H1 (cell line): ENCODE measurements at regions of chr1 and their contacts with region 1.

Region 1: DNA sequence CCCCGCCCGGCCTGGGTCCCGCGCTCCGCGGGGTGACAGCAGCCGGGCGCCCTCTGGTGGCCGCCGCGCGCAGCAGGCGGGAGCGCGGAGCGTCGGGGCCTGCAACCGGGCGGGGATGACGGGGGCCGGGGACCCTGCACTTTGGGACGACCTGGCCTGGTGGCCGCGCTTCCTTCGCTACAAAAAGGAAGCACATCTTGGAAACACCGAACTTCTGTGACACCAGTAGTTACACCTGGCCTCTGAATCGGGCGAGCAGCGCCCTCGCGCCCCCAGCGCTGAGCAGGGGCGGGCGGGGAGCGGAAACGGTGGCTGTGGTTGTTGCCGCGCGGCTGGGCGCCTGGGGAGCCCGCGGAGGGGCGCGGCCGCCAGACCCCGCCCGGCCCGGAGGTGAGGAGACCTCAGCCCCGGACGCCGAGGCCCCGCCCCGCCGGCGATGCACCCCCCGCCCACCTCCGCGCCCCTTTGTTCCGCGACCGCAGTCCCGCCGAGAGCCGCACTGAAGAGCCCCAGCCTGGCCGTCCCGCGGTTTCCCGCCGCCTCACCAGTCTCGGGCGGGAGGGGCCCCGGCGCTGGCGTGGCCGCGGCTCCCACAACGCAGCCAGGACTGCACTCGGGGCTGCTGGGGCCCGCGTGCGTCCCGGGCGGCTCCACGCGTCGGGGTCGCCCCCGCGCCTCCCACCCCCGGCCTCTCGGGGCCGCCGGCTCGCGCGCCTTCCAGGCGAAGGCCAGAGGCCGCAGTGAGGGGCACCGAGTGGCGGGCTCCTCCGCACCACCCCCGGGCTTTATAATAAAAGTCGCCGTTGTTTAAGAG is 59.3 kb downstream of the H3-3A start:
- DNase-seq: peak in 1 of 2 experiments; percentile 89
- H3K4me3 ChIP-seq: peak overlapping the region; percentile 54 to 89 (median 68)
- H3K27ac ChIP-seq: peak overlapping the region; percentile 90; the same call in 1 of the 2 replicates
- H3K4me1 ChIP-seq: peaks cover 4 to 27% (median 14%) of the 10 kb centered on the region in 4 experiments
- H3K27me3 ChIP-seq: peaks cover 0 to 7% (median 4%) of the 10 kb centered on the region in 4 experiments; a peak in 3 of 7 replicates
- CTCF ChIP-seq: peak; percentile 75 to 88 (median 79)
- EP300 ChIP-seq: no peak
- POLR2A ChIP-seq: peak in 1 of 2 experiments; percentile 82; a peak in 1 of 3 replicates
- RAD21 ChIP-seq: peak; percentile 50 to 83

Region 2: DNA sequence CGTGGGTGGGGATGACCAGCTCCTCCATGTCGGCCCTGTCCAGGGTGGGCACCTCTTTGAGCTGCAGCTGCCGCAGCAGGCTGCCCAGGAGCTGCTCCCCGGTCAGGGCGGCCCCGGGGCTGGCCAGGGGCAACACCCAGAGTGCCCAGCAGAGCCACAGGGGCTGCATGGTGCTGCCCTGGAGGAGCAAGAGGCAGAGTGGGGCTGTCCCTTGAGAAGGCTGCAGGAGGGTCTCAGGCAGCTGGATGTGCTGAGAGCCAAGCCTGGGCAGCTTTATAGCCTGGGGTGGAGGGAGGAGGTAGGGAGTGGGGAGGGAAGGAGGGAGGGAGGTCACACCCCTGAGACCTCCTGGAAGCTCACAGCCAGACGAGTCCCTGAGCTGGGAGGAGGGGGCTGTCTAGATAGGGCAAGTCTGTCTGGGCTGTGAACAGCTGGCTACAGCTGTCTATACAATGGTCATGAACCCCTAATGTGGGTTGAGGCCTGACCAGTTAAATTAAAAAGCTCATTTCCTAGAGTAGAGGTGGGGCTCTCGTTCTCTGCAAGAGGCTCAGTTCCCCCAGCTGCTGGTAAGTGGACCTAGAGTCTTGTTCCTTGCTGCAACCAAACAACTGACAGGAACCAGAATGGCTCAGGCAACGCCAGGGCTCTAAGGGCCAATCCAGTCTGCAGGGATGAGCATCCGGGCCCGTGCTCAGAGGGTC is 232.7 kb before region 1 on chr1 and contains the start of gene LEFTY1:
- CTCF ChIA-PET with region 1: no interaction called
- POLR2A ChIA-PET with region 1: no interaction called
- DNase-seq: no peak
- H3K4me3 ChIP-seq: peak within 1 kb of the TSS in 1 of 4 experiments; percentile 41; a peak in 1 of 8 replicates
- H3K27ac ChIP-seq: no peak within 1 kb of the TSS
- H3K4me1 ChIP-seq: peaks cover 10 to 34% (median 22%) of the 10 kb centered on the region in 4 experiments
- H3K27me3 ChIP-seq: peaks cover 0 to 14% (median 6%) of the 10 kb centered on the region in 4 experiments; a peak in 4 of 7 replicates
- CTCF ChIP-seq: no peak
- EP300 ChIP-seq: no peak
- POLR2A ChIP-seq: no peak
- RAD21 ChIP-seq: no peak
- total RNA-seq, gene LEFTY1: 8.4 and 11.7 TPM in 2 replicates

Region 3: GRCh38 chr1:226083302-226084101 is 38.3 kb before region 1 on chr1:
- CTCF ChIA-PET with region 1: interaction called, 27 read pairs
- POLR2A ChIA-PET with region 1: interaction called, 9 read pairs
- DNase-seq: peak in 1 of 2 experiments; percentile 98
- H3K4me3 ChIP-seq: peak overlapping the region; percentile 60 to 81 (median 71)
- H3K27ac ChIP-seq: no peak overlapping the region
- H3K4me1 ChIP-seq: peaks cover 0 to 5% (median 3%) of the 10 kb centered on the region in 4 experiments; a peak in 5 of 7 replicates
- H3K27me3 ChIP-seq: peaks cover 0 to 11% (median 9%) of the 10 kb centered on the region in 4 experiments; a peak in 3 of 7 replicates
- CTCF ChIP-seq: no peak
- EP300 ChIP-seq: no peak
- POLR2A ChIP-seq: no peak
- RAD21 ChIP-seq: 0 out of 4 replicates have a peak, but pooled peaks of 1 of the 2 experiments have one; percentile 0

Region 4: GRCh38 chr1:226135059-226135651 is 13.4 kb after region 1 on chr1:
- CTCF ChIA-PET with region 1: interaction called, 66 read pairs
- POLR2A ChIA-PET with region 1: interaction called, 17 read pairs
- DNase-seq: peak in 1 of 2 experiments; percentile 52
- H3K4me3 ChIP-seq: no peak overlapping the region
- H3K27ac ChIP-seq: no peak overlapping the region
- H3K4me1 ChIP-seq: peaks cover 3 to 11% (median 7%) of the 10 kb centered on the region in 4 experiments; a peak in 6 of 7 replicates
- H3K27me3 ChIP-seq: no peaks in the 10 kb centered on the region
- CTCF ChIP-seq: no peak
- EP300 ChIP-seq: no peak
- POLR2A ChIP-seq: no peak
- RAD21 ChIP-seq: no peak

Region 5: DNA sequence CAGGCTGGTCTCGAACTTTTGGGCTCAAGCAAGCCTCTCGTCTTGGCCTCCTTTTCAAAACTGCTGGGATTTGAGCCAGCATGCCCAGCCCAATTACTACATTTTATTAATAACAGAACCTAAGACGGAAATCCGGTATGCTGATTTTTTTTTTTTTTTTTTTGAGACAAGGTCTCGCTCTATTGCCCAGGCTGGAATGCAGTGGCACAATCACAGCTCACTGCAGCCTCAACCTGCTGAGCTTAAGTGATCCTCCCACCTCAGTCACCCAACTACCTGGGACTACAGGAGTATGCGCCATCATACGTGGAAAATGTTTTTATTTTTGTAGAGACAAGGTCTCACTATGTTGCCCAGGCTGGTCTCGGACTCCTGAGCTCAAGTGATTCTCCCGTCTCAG is 44.5 kb after region 1 on chr1:
- CTCF ChIA-PET with region 1: interaction called, 13 read pairs
- POLR2A ChIA-PET with region 1: no interaction called
- DNase-seq: no peak
- H3K4me3 ChIP-seq: no peak overlapping the region
- H3K27ac ChIP-seq: no peak overlapping the region
- H3K4me1 ChIP-seq: no peaks in the 10 kb centered on the region
- H3K27me3 ChIP-seq: no peaks in the 10 kb centered on the region
- CTCF ChIP-seq: no peak
- EP300 ChIP-seq: no peak
- POLR2A ChIP-seq: no peak
- RAD21 ChIP-seq: no peak

Region 6: GRCh38 chr1:226217273-226217672 is 95.5 kb after region 1 on chr1:
- CTCF ChIA-PET with region 1: interaction called, 14 read pairs
- POLR2A ChIA-PET with region 1: interaction called, 4 read pairs
- DNase-seq: no peak
- H3K4me3 ChIP-seq: no peak overlapping the region
- H3K27ac ChIP-seq: no peak overlapping the region
- H3K4me1 ChIP-seq: peaks cover 0 to 11% (median 4%) of the 10 kb centered on the region in 4 experiments; a peak in 3 of 7 replicates
- H3K27me3 ChIP-seq: peaks cover 0 to 2% (median under 1%) of the 10 kb centered on the region in 4 experiments; a peak in 2 of 7 replicates
- CTCF ChIP-seq: no peak
- EP300 ChIP-seq: no peak
- POLR2A ChIP-seq: no peak
- RAD21 ChIP-seq: no peak